Right ventricle myocardium inferior (tissue), 1 donor: ENCODE measurements at regions of chr18 and their contacts with region 1.

Region 1: DNA sequence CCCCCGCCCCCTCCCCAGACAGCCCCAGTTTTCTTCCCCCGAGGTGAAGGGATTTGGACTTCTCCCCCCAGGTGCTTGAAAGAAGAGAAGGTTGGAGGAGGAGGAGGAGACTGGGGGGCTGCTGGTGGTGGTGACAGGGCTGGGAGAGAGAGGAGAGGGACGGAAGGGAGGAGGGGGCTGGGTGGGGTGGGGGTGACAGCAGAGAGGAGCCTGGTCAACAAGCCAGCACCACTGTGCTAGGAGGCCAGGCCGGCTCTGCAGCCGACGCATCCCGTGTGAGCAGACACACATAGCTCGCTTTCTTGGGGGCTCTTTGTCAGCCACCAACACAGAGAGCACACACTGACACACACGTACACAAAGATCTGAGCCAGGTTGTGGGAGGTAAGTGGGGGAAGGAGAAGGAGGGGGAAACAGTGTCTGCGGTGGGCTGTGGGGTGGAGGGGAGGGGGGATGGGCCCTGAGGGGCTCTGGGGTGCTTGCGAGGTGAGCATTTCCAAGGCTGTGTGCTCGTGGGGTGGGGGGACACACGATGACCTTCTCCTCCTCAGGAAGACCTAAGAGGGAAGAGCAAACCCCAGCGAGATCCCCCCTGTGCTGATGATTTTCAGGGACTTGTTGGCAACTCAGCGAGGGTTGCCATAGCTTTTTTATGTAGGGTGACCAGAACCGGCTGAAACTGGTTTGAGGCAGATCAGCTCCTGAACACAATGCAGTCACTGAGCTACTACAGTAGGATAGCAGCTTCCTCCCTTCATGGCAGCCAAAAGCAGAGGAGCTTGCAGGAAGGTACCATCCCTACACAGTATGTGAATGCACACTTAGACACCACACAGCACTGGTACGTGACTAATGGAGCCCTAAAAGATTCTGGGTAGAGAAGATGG is at the start of gene ZNF532:
- DNase-seq: no peak
- ATAC-seq: peak; percentile 44
- total RNA-seq, gene ZNF532: 64.1 TPM

Region 2: DNA sequence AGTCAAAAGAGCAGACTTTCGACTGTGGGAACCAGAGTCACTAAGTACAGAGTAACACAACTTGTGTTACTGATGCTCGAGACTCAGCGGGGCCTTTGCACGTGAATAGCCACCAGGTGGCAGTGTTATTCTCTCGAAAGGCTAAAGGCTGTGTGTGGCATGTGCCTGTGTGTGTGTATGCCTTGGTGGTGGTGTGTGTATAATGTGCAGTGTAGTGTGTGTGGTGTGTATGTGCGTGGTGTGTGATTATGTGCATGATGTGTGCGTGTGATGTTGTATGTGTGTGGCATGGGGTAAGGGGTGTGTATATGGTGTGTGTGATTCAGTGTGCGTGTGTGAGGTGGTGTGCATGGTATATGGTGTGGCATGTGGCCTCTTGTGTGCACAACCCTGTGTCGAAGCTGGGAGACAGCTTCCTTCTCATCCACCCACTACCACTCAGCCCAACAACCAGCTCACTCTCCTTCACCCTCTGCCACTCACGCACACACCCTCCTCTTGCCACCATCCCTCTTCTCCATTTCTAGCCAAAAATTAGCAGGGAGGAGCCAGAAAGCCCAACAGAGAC is 82.7 kb before region 1 on chr18:
- intact Hi-C with region 1: loop called (anchors 5 kb)
- DNase-seq: no peak
- ATAC-seq: peak; percentile 91

Region 3: GRCh38 chr18:58911766-58912165 is 47.4 kb after region 1 on chr18:
- intact Hi-C with region 1: loop called (anchors 5 kb)
- DNase-seq: no peak
- ATAC-seq: peak; percentile 68

Region 4: GRCh38 chr18:58928386-58928785 is 64.0 kb after region 1 on chr18:
- intact Hi-C with region 1: loop called (anchors 5 kb)
- DNase-seq: no peak
- ATAC-seq: peak; percentile 30

Region 5: GRCh38 chr18:58998401-58999203 is 134.2 kb after region 1 on chr18:
- intact Hi-C with region 1: loop called (anchors 5 kb)
- DNase-seq: no peak
- ATAC-seq: peak; percentile 81

Region 6: GRCh38 chr18:59070181-59070912 is 206.0 kb after region 1 on chr18:
- intact Hi-C with region 1: loop called (anchors 5 kb)
- DNase-seq: peak; percentile 86
- ATAC-seq: peak; percentile 80